K562 (cell line): ENCODE measurements at regions of chr17 and their contacts with region 1.

Region 1: GRCh38 chr17:75779231-75779986 is 5.2 kb upstream of the UNK start:
- DNase-seq: peak; percentile 94 to 99 (median 98)
- ATAC-seq: peak; percentile 73
- H3K4me3 ChIP-seq: peak overlapping the region; percentile 85
- H3K27ac ChIP-seq: peak overlapping the region; percentile 92
- H3K4me1 ChIP-seq: peaks cover 9 to 22% of the 10 kb centered on the region in 2 experiments; a peak in 4 of 5 replicates
- H3K27me3 ChIP-seq: no peaks in the 10 kb centered on the region
- CTCF ChIP-seq: 0 out of 6 replicates have a peak, but pooled peaks of 1 of the 3 experiments have one; percentile 2
- EP300 ChIP-seq: 0 out of 2 replicates have a peak, but pooled peaks have one; percentile 16
- POLR2A ChIP-seq: peak; percentile 100
- RAD21 ChIP-seq: no peak; a peak in 1 of 4 replicates

Region 2: GRCh38 chr17:75228305-75228704 is 551.1 kb before region 1 on chr17:
- CTCF ChIA-PET with region 1: no interaction called
- POLR2A ChIA-PET with region 1: no interaction called
- in situ Hi-C with region 1: no loop called
- intact Hi-C with region 1: no loop called
- DNase-seq: no peak
- ATAC-seq: no peak
- H3K4me3 ChIP-seq: no peak overlapping the region
- H3K27ac ChIP-seq: no peak overlapping the region
- H3K4me1 ChIP-seq: no peaks in the 10 kb centered on the region
- H3K27me3 ChIP-seq: no peaks in the 10 kb centered on the region
- CTCF ChIP-seq: no peak
- EP300 ChIP-seq: no peak
- POLR2A ChIP-seq: no peak
- RAD21 ChIP-seq: no peak

Region 3: GRCh38 chr17:75793460-75793859 is 14.1 kb after region 1 on chr17:
- CTCF ChIA-PET with region 1: no interaction called
- POLR2A ChIA-PET with region 1: interaction called, 132 read pairs
- in situ Hi-C with region 1: no loop called
- intact Hi-C with region 1: no loop called
- DNase-seq: no peak
- ATAC-seq: no peak
- H3K4me3 ChIP-seq: no peak overlapping the region
- H3K27ac ChIP-seq: no peak overlapping the region
- H3K4me1 ChIP-seq: peaks cover 0 to 10% of the 10 kb centered on the region in 2 experiments; a peak in 2 of 5 replicates
- H3K27me3 ChIP-seq: no peaks in the 10 kb centered on the region
- CTCF ChIP-seq: no peak
- EP300 ChIP-seq: no peak
- POLR2A ChIP-seq: no peak
- RAD21 ChIP-seq: no peak

Region 4: GRCh38 chr17:75808905-75809715 is 29.7 kb after region 1 on chr17:
- CTCF ChIA-PET with region 1: no interaction called
- POLR2A ChIA-PET with region 1: interaction called, 37 read pairs
- in situ Hi-C with region 1: no loop called
- intact Hi-C with region 1: no loop called
- DNase-seq: peak in 2 of 4 experiments; percentile 20 to 67
- ATAC-seq: peak; percentile 58
- H3K4me3 ChIP-seq: no peak overlapping the region
- H3K27ac ChIP-seq: no peak overlapping the region; the same call in 2 of the 3 replicates
- H3K4me1 ChIP-seq: peaks cover 10 to 24% of the 10 kb centered on the region in 2 experiments
- H3K27me3 ChIP-seq: no peaks in the 10 kb centered on the region
- CTCF ChIP-seq: no peak
- EP300 ChIP-seq: no peak
- POLR2A ChIP-seq: no peak
- RAD21 ChIP-seq: peak in 1 of 2 experiments; percentile 11; a peak in 1 of 4 replicates

Region 5: GRCh38 chr17:75827252-75828115 is 48.1 kb after region 1 on chr17:
- CTCF ChIA-PET with region 1: no interaction called
- POLR2A ChIA-PET with region 1: interaction called, 121 read pairs
- in situ Hi-C with region 1: no loop called
- intact Hi-C with region 1: no loop called
- DNase-seq: peak in 3 of 4 experiments; percentile 58 to 65 (median 65)
- ATAC-seq: peak; percentile 62
- H3K4me3 ChIP-seq: no peak overlapping the region
- H3K27ac ChIP-seq: no peak overlapping the region
- H3K4me1 ChIP-seq: peaks cover 0 to 53% of the 10 kb centered on the region in 2 experiments; a peak in 2 of 5 replicates
- H3K27me3 ChIP-seq: no peaks in the 10 kb centered on the region
- CTCF ChIP-seq: peak; percentile 59 to 73 (median 64)
- EP300 ChIP-seq: no peak
- POLR2A ChIP-seq: 0 out of 2 replicates have a peak, but pooled peaks have one; percentile 1
- RAD21 ChIP-seq: peak in 1 of 2 experiments; percentile 54; a peak in 2 of 4 replicates

Region 6: DNA sequence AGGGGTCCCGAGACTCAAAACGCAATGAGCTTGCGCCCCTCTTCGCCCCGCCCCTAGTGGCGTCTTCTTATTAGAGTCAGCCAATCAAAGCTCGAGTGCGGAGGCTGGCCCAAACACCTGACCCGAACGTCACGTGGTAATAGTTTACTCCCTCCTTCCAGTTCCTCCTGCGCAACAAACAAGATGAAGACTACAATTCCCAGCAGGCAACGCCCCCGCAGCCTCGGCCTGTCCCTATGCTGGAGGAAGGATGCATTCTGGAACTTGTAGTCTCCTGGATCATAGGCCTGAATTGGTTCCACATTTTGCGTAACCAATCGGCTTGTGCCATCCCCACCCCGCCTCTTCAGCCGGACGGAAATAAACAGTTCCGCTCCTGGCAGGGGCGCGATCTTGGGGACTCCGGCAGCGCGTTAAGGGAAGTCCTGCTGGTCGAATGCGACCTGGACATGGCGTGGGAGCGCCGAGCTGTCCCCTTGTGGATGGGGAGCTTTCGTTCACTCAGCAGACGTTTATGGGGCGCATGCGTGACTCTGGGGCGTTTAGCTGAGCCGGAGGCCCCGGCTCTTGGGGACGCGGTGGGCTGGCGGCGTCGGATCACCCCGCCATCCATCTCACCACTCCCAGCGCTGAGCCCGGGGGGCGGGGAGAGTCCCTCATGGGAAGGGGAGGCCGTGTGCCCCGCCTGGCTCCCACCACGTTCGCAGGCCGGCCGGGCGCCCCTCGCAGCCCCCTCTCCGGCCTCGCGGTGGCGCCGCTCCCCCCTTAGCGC is 76.1 kb after region 1 on chr17 and contains the start of gene WBP2:
- CTCF ChIA-PET with region 1: no interaction called
- POLR2A ChIA-PET with region 1: interaction called, 145 read pairs
- in situ Hi-C with region 1: no loop called
- intact Hi-C with region 1: loop called (anchors 5 kb)
- DNase-seq: peak; percentile 91 to 100 (median 95)
- ATAC-seq: peak; percentile 90
- H3K4me3 ChIP-seq: peak within 1 kb of the TSS; percentile 88
- H3K27ac ChIP-seq: peak within 1 kb of the TSS; percentile 93
- H3K4me1 ChIP-seq: peaks cover 31% of the 10 kb centered on the region in 2 experiments
- H3K27me3 ChIP-seq: no peaks in the 10 kb centered on the region
- CTCF ChIP-seq: peak; percentile 59 to 76 (median 66)
- EP300 ChIP-seq: no peak
- POLR2A ChIP-seq: peak; percentile 98
- RAD21 ChIP-seq: peak; percentile 57 to 59; a peak in 3 of 4 replicates
- polyA plus RNA-seq, gene WBP2: 2.2 to 3.7 TPM

Region 7: DNA sequence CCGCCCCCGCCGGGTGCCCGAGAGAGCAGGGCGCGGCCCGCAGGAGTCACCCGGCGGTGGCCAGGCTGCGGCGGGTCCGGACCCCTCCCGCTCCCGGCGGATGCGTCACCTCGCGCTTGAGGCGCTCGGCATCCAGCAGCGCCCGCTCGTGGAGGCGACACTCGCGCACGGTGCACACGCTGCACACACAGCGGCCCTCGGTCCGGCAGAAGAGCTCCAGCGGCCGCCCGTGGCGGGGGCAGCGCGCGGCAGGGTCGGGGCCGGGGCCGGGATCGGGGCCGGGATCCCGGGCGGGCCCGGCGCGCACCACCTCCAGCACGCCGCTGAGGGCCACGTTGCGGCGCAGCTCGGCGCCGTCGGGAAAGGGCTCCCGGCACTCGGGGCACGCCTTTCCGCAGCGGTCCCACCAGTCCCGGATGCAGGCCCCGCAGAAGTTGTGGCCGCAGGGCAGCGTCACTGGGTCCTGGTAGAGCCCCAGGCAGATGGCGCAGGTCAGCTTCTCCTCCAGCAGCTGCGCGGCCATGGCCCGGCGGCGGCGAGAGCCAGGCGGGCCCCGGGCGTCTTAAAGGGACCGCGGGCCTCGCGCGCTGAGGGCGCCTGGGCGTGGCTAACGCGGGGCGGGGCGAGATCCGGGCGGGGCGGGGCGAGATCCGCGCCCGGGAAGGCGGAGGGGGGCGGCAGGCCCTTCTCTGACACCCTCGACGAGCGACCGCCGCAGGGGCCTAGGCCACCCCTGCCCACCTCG is 117.2 kb after region 1 on chr17 and contains the start of gene TRIM65:
- CTCF ChIA-PET with region 1: no interaction called
- POLR2A ChIA-PET with region 1: interaction called, 24 read pairs
- in situ Hi-C with region 1: no loop called
- intact Hi-C with region 1: no loop called
- DNase-seq: peak; percentile 87 to 93 (median 92)
- ATAC-seq: peak; percentile 89
- H3K4me3 ChIP-seq: peak within 1 kb of the TSS; percentile 93
- H3K27ac ChIP-seq: peak within 1 kb of the TSS; percentile 96
- H3K4me1 ChIP-seq: peaks cover 13 to 81% of the 10 kb centered on the region in 2 experiments; a peak in 4 of 5 replicates
- H3K27me3 ChIP-seq: no peaks in the 10 kb centered on the region
- CTCF ChIP-seq: peak; percentile 41 to 88 (median 69); a peak in 5 of 6 replicates
- EP300 ChIP-seq: no peak
- POLR2A ChIP-seq: peak; percentile 88
- RAD21 ChIP-seq: peak; percentile 76 to 77
- polyA plus RNA-seq, gene TRIM65: 2.8 to 5.8 TPM